Activated CD8-positive, alpha-beta T cell treated with anti-CD3 and anti-CD28 coated beads, Interleukin-2, amount 10 ng/mL, durations not matched to agents 7 days and 5 days (primary cell): ENCODE measurements at regions of chr9 and their contacts with region 1.

Region 1: DNA sequence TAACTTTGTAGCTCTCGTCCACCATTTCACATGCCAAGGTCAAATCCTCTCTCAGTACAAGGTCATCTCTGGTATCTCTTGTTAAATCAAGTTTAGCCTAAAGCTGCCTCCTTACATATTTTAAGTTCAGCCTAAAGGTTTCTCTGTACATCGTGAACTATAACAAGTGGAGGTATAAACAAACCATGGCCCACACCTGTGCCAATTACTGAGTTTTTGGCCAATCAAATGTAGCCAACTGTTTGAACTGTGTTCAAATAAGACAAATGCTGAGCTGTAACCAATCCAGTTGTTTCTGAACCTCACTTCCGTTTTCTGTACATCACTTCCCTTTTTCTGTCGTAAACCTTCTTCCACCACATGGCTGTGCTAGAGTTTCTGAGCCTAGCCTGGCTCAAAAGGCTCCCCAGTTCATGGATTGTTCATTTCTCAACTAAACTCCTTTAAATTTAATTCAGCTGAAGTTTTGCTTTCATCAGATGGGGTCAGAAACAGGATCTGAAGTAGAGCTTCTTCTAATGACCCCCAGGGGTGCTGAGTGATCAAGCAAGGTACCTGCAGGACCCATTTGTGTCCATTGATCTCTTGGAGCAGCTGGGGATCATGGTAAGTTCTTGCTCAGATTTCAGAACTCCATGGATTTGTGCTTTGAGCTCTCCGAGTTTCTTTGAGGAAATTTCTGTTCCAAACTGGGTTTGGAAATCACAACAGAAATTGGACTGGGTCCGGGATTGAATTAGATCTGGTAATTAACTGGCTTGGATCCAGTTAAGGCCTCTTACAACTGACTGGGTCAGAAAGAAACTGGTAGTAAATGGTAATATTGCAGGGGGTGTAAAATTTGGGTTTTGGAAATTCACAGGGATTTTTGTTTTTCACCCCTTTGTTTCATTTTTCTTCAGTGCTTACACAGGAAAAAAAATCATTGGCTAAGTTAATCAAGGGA is 11.0 kb upstream of the NANS start:
- DNase-seq: peak; percentile 71
- ATAC-seq: peak; percentile 95
- H3K4me3 Mint-ChIP-seq: peak overlapping the region; percentile 84
- H3K27ac Mint-ChIP-seq: peak overlapping the region; percentile 93
- H3K4me1 Mint-ChIP-seq: peaks cover 42% of the 10 kb centered on the region
- H3K27me3 Mint-ChIP-seq: no peaks in the 10 kb centered on the region

Region 2: DNA sequence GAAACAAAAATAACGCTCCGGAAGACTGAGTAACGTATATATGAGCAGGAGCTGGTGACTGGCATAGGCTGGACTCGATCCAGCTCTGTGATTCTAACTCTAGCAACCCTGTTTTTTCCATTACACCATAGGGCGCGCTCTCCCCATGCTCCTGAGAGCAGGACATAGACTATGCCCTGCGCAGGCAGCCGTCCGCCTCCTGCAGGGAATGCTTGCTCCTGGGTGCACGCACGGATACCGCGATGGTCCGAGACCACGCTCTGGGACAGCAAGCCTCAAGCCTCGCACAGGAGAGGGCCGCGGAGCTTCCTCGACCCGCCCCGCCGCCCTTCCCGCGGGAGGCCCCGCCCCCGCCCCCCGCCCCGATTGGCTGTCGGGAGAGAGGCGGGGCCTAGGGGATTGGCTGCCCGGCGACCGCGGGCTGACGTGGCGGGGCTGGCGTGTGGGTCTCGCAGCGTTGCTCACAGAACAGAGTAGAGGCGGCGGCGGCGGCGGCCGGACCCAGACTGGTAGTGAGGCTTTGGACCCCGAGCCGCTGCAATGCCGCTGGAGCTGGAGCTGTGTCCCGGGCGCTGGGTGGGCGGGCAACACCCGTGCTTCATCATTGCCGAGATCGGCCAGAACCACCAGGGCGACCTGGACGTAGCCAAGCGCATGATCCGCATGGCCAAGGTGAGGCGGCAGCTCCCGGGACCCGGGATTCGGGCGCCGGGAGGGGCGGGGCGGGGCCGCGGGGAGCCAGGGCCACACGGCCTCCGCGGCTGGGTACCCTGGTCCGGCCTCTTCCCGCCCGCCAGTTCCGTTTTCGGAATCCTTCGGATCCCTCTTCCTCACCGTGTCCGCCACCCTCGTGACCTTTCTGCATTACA is 11.0 kb after region 1 on chr9 and contains the start of gene NANS:
- CTCF ChIA-PET with region 1: interaction called, 26 read pairs
- POLR2A ChIA-PET with region 1: interaction called, 20 read pairs
- DNase-seq: peak; percentile 95
- ATAC-seq: peak; percentile 95
- H3K4me3 Mint-ChIP-seq: peak within 1 kb of the TSS; percentile 99
- H3K27ac Mint-ChIP-seq: peak within 1 kb of the TSS; percentile 99
- H3K4me1 Mint-ChIP-seq: peaks cover 39% of the 10 kb centered on the region
- H3K27me3 Mint-ChIP-seq: no peaks in the 10 kb centered on the region
- total RNA-seq, gene NANS: 45.5 to 46.6 TPM